ENCODE measurements at regions of chr4 and their contacts with region 1.

Region 1: GRCh38 chr4:70839589-70840093 is at the start of gene GRSF1:
- DNase-seq: peak; percentile 92
- H3K4me3 Mint-ChIP-seq: peak within 1 kb of the TSS; percentile 95
- H3K27ac Mint-ChIP-seq: peak within 1 kb of the TSS; percentile 92
- H3K4me1 Mint-ChIP-seq: peaks cover 9% of the 10 kb centered on the region
- H3K27me3 Mint-ChIP-seq: no peaks in the 10 kb centered on the region
- CTCF ChIP-seq: no peak
- total RNA-seq, gene GRSF1: 60.2 and 69.3 TPM in 2 replicates

Region 2: DNA sequence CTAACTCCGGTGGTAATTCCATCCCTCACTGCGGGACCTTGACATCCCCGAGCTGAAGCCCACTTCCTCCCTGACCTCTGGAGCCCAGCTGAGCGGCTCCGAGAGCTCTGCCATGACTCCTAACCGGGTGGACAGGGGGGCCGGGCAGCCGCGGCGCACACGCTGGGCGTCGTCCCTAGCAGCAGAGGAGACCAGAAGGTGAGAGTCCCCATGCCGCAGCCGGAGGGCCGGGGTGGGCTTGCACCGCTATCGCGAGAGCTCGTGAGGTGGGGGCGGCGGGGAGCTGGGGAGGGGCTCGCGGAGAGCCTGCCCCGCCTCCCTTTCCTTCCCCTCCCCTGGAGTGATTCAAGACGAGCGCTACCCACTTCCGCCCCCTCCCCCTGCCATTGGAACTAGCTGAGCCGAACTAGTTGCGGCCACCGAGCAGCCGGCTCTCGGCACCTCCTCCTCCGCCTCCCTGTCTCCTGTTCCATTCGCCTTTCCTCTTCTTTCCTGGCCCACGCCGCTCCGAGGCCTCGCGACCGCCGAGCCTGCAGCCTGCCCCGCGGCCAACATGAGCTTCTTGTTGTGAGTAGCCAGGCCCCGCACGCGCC is 62.4 kb after region 1 on chr4 and contains the start of gene MOB1B:
- CTCF ChIA-PET with region 1: interaction called, 5 read pairs
- POLR2A ChIA-PET with region 1: interaction called, 19 read pairs
- intact Hi-C with region 1: no loop called
- DNase-seq: peak; percentile 82
- H3K4me3 Mint-ChIP-seq: peak within 1 kb of the TSS; percentile 85
- H3K27ac Mint-ChIP-seq: peak within 1 kb of the TSS; percentile 68
- H3K4me1 Mint-ChIP-seq: peaks cover 9% of the 10 kb centered on the region
- H3K27me3 Mint-ChIP-seq: no peaks in the 10 kb centered on the region
- CTCF ChIP-seq: peak; percentile 35
- total RNA-seq, gene MOB1B: 16.1 and 19.9 TPM in 2 replicates

Region 3: GRCh38 chr4:70993181-70994068 is 153.8 kb after region 1 on chr4 and contains the start of gene DCK:
- CTCF ChIA-PET with region 1: no interaction called
- POLR2A ChIA-PET with region 1: interaction called, 20 read pairs
- intact Hi-C with region 1: loop called (anchors 1 kb)
- DNase-seq: peak; percentile 92
- H3K4me3 Mint-ChIP-seq: peak within 1 kb of the TSS; percentile 85
- H3K27ac Mint-ChIP-seq: peak within 1 kb of the TSS; percentile 85
- H3K4me1 Mint-ChIP-seq: peaks cover 26% of the 10 kb centered on the region
- H3K27me3 Mint-ChIP-seq: no peaks in the 10 kb centered on the region
- CTCF ChIP-seq: no peak
- total RNA-seq, gene DCK: 8.0 and 9.5 TPM in 2 replicates

Region 4: DNA sequence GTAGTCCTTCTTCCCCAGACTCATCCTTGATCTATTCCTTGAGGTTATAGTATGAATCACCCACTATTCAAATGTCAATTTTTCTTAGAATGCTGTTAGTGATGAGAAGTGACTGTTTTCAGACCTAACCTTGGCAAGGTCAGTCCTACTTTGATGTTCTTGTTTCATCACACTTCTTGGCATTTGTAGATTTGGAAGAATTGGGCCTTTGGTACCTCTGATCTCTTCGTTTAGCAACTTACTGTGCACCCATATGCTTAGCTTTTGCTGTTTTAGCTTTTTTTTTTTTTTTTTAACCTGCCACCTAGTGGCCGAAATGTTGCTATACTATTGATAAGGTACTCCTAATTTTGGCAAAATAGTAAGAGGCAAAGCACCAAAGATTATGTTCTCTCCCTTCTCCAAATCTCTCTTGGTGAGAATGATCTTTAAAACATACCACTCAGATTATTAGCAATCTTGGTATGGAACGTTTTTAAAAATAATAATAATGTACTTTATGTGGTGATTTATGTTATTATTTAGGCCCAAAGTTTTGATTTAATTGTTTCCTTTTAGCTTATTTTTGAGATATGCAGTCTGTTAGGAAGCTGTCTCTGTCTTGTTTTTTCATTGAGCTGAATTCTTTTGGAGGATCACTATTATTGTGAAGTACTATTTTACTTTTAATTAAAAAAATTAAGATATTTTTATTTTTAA is 170.4 kb after region 1 on chr4:
- CTCF ChIA-PET with region 1: interaction called, 6 read pairs
- POLR2A ChIA-PET with region 1: interaction called, 3 read pairs
- intact Hi-C with region 1: loop called (anchors 5 kb)
- DNase-seq: peak; percentile 46
- H3K4me3 Mint-ChIP-seq: no peak overlapping the region
- H3K27ac Mint-ChIP-seq: no peak overlapping the region
- H3K4me1 Mint-ChIP-seq: peaks cover 12% of the 10 kb centered on the region
- H3K27me3 Mint-ChIP-seq: no peaks in the 10 kb centered on the region
- CTCF ChIP-seq: peak; percentile 35

Measured in MCF 10A (cell line).